MCF 10A (cell line): ENCODE measurements at regions of chr5 and their contacts with region 1.

Region 1: GRCh38 chr5:95730730-95731570 is at the start of gene RHOBTB3:
- DNase-seq: peak; percentile 61
- H3K4me3 Mint-ChIP-seq: peak within 1 kb of the TSS; percentile 73
- H3K27ac Mint-ChIP-seq: no peak within 1 kb of the TSS
- H3K4me1 Mint-ChIP-seq: no peaks in the 10 kb centered on the region
- H3K27me3 Mint-ChIP-seq: no peaks in the 10 kb centered on the region
- CTCF ChIP-seq: no peak
- total RNA-seq, gene RHOBTB3: 3.4 and 3.8 TPM in 2 replicates

Region 2: GRCh38 chr5:95620030-95620869 is 110.7 kb before region 1 on chr5 and contains the start of gene GPR150:
- CTCF ChIA-PET with region 1: no interaction called
- POLR2A ChIA-PET with region 1: no interaction called
- intact Hi-C with region 1: no loop called
- DNase-seq: no peak
- H3K4me3 Mint-ChIP-seq: no peak within 1 kb of the TSS
- H3K27ac Mint-ChIP-seq: no peak within 1 kb of the TSS
- H3K4me1 Mint-ChIP-seq: peaks cover 9% of the 10 kb centered on the region
- H3K27me3 Mint-ChIP-seq: no peaks in the 10 kb centered on the region
- CTCF ChIP-seq: no peak
- total RNA-seq, gene GPR150: not detected in 2 replicates

Region 3: DNA sequence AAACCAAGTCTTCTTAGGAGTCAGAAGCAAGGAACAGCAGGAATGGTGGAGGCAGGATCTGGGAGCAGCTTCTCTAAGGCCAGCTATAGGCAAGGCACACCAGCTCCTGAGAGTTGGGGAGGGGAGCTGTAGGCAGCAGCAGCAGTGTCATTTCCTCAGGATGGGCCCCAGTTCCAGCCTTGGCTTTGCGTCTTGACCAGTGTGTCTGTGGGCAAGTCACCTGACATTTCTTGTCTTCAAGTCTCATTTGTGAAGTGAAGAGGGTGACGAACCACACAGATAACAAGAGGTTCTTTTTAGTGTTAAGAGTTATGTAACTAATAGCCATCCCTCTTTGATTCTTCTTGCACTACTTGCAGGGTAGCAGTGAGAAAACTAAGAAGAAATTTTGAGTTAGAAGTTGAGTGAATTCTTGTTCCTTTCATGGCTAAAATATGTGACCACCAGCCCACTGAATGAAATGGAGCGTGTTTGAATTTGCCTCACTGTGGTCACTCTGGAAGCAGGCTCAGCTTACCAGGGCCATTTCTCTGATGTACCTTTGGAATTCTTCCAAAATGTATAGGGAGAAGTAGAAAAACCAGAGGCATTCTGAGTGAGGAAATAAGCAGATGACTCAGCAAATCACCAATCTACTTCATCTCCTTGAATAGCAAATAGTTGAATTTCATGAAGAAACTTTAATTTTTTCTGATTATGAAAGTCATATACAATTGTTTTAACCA is 42.5 kb after region 1 on chr5:
- CTCF ChIA-PET with region 1: interaction called, 3 read pairs
- POLR2A ChIA-PET with region 1: interaction called, 25 read pairs
- intact Hi-C with region 1: no loop called
- DNase-seq: peak; percentile 83
- H3K4me3 Mint-ChIP-seq: no peak overlapping the region
- H3K27ac Mint-ChIP-seq: no peak overlapping the region
- H3K4me1 Mint-ChIP-seq: peaks cover 13% of the 10 kb centered on the region
- H3K27me3 Mint-ChIP-seq: no peaks in the 10 kb centered on the region
- CTCF ChIP-seq: no peak

Region 4: GRCh38 chr5:95803284-95804148 is 72.6 kb after region 1 on chr5:
- CTCF ChIA-PET with region 1: no interaction called
- POLR2A ChIA-PET with region 1: no interaction called
- intact Hi-C with region 1: no loop called
- DNase-seq: no peak
- H3K4me3 Mint-ChIP-seq: no peak overlapping the region
- H3K27ac Mint-ChIP-seq: no peak overlapping the region
- H3K4me1 Mint-ChIP-seq: no peaks in the 10 kb centered on the region
- H3K27me3 Mint-ChIP-seq: no peaks in the 10 kb centered on the region
- CTCF ChIP-seq: no peak